ENCODE measurements at regions of chr4 and their contacts with region 1.

Region 1: DNA sequence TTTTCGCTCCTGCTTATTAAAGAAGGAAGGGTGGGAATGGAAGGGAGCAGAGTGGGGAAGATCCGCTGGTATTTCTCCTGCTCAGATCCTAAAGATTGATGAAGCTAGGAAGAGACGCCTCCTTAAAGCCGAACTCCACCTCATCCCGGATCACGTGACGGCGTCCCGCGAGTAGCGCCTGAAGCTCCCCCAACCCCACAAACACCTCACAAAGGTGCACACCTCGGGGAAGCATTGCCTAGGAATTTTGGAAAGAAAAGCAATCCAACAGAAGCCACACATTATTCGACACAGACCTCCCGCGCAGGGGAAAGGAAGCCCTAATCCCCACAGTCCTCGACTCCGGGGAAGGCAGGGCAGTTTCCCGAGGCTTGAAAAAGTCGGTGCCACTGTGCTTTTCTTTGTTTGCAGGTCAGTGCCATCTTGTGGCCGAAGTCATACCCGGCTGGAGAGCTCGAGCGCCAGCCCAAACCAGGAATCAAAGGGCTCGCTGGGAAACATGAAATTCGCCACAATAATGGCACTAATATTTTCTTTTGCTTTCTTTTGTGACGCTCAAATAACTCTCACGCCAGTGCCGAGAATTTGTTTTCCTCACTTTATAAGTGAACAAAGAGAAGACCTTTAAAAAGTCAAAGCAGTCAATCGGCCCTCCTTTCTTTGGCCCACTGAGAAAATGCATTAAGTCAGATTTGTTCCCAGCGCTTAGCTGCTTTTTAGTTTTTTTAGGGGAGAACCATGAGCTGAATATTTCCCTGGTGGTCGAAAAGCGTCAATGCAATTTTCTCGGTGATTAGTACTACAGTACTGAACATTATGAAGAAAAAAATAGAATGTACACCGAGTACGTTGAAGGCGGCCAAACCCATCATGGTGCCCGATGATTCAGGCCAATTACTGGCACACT is at the start of gene NPY1R:
- DNase-seq: peak; percentile 79
- H3K4me3 ChIP-seq: peak within 1 kb of the TSS; percentile 29
- H3K27ac ChIP-seq: no peak within 1 kb of the TSS
- H3K4me1 ChIP-seq: no peaks in the 10 kb centered on the region
- H3K27me3 ChIP-seq: peaks cover 3% of the 10 kb centered on the region
- CTCF ChIP-seq: peak; percentile 66
- total RNA-seq, gene NPY1R: 1.6 to 2.0 TPM

Region 2: GRCh38 chr4:162497564-162498167 is 835.1 kb before region 1 on chr4:
- intact Hi-C with region 1: loop called (anchors 5 kb)
- DNase-seq: no peak
- H3K4me3 ChIP-seq: no peak overlapping the region
- H3K27ac ChIP-seq: no peak overlapping the region
- H3K4me1 ChIP-seq: no peaks in the 10 kb centered on the region
- H3K27me3 ChIP-seq: no peaks in the 10 kb centered on the region
- CTCF ChIP-seq: peak; percentile 76

Region 3: DNA sequence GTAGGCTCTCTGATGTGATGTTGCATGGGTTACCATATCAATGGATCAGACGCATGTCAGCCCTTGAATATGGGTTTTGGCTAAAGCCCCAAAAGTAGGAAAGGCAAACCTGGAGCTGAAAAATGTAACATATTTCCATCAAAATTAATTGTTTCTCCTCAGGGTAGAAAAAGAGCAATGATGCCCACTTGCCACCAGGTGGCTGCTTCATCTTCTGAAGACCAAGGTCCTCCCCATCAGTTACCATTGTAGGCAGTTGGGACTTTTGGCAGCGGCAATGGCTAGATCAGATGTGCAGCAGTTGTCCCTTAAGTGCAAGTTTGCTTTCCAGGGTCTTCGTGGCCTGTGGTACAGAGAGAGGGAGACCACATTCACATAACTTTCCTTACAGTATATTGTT is 284.3 kb before region 1 on chr4:
- intact Hi-C with region 1: loop called (anchors 5 kb)
- DNase-seq: no peak
- H3K4me3 ChIP-seq: no peak overlapping the region
- H3K27ac ChIP-seq: no peak overlapping the region
- H3K4me1 ChIP-seq: no peaks in the 10 kb centered on the region
- H3K27me3 ChIP-seq: no peaks in the 10 kb centered on the region
- CTCF ChIP-seq: peak; percentile 33

Region 4: DNA sequence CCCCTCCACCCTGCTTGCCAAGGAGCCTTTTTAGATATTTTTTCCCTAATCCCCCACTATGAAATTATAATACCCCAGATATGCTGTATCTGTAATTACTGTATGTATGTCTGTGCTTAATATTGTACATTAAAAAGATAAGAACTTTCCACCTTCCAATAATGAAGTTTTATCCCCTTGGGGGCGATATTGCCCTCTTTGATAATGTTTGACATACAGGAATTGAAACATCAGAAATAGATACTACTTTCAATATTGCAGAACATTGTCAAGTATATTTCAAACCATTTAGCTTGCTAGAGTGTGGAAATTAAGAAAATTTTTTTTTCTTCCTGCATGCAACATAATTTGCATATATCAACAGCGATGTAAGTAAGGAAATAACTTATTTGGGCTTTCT is 225.0 kb before region 1 on chr4:
- intact Hi-C with region 1: loop called (anchors 5 kb)
- DNase-seq: no peak
- H3K4me3 ChIP-seq: no peak overlapping the region
- H3K27ac ChIP-seq: no peak overlapping the region
- H3K4me1 ChIP-seq: no peaks in the 10 kb centered on the region
- H3K27me3 ChIP-seq: no peaks in the 10 kb centered on the region
- CTCF ChIP-seq: no peak

Region 5: DNA sequence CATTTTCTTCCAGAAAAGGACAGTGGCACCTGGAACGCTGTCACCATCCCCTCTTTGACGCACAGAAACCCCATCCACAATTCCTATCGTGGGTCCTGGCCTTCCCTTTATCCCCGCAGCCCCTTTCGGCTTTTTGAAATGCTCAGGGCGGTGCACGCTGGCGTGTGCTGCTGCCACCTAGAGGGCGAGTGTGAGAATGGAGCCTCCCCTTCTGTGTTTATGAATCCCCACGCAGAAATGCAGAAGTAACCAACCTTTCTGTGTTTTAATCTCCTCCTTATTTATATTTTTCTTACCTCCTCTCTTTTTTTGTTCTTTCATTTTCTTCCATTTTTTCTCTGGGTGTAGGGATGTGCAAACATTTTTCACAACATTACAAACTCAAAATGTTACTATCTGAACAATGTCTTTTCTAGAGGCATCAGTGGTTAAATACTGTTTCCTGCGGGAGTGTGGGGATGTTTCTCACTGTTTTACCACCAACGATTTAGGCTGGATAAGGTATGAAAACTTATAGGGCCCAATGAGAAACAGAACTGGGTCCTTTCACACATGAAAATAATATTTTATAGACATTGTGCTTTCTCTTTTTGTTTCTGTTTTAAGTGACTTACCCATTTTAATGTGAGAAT is 211.8 kb after region 1 on chr4:
- intact Hi-C with region 1: loop called (anchors 10 kb)
- DNase-seq: peak; percentile 61
- H3K4me3 ChIP-seq: peak overlapping the region; percentile 19
- H3K27ac ChIP-seq: no peak overlapping the region
- H3K4me1 ChIP-seq: no peaks in the 10 kb centered on the region
- H3K27me3 ChIP-seq: no peaks in the 10 kb centered on the region
- CTCF ChIP-seq: peak; percentile 91